ENCODE measurements at regions of chr6 and their contacts with region 1.

Region 1: DNA sequence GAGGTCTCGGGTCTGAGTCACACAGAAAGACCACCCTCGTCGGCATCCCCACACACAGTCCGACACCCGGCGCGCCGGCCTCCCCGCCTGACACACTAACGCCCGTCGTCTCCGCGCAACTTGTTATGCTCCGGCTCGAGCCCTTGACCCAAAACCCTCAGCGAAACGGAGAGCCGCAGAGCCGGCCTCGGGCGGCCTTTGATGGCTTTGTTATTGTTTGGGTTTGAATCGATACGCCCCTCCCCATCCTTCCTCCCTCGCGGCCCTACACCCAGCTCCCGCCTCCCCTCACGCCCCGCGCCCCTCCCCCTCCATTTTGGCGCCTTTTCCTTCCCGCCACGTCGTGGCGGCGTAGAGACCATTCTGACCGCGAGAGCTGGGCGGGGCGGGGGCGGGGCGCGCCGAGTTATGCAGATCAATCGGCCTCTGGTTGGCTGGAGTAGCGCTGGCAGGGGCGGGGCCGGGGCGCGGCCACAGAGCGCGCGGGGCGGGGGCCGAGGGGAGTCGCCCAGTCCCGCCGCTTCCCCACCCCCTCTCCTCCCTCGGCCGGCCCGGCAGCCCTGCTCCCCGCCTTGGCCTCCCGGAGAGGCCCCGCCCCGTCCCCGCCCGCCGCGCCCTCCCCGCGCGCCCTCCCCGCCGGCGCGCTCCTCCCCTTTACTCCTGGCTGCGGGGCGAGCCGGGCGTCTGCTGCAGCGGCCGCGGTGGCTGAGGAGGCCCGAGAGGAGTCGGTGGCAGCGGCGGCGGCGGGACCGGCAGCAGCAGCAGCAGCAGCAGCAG is at the start of gene PIM1:
- DNase-seq: peak; percentile 100
- ATAC-seq: peak; percentile 96
- H3K4me3 ChIP-seq: peak within 1 kb of the TSS; percentile 56 to 99
- H3K27ac ChIP-seq: peak within 1 kb of the TSS; percentile 64 to 91
- H3K4me1 ChIP-seq: peaks cover 0 to 4% of the 10 kb centered on the region in 2 donors
- H3K27me3 ChIP-seq: no peaks in the 10 kb centered on the region
- total RNA-seq, gene PIM1: 42.7 to 54.2 TPM

Region 2: GRCh38 chr6:36526066-36526465 is 643.6 kb before region 1 on chr6:
- intact Hi-C with region 1: no loop called
- DNase-seq: no peak
- ATAC-seq: no peak
- H3K4me3 ChIP-seq: no peak overlapping the region
- H3K27ac ChIP-seq: no peak overlapping the region
- H3K4me1 ChIP-seq: peaks cover 0 to 2% of the 10 kb centered on the region in 2 donors
- H3K27me3 ChIP-seq: no peaks in the 10 kb centered on the region

Region 3: DNA sequence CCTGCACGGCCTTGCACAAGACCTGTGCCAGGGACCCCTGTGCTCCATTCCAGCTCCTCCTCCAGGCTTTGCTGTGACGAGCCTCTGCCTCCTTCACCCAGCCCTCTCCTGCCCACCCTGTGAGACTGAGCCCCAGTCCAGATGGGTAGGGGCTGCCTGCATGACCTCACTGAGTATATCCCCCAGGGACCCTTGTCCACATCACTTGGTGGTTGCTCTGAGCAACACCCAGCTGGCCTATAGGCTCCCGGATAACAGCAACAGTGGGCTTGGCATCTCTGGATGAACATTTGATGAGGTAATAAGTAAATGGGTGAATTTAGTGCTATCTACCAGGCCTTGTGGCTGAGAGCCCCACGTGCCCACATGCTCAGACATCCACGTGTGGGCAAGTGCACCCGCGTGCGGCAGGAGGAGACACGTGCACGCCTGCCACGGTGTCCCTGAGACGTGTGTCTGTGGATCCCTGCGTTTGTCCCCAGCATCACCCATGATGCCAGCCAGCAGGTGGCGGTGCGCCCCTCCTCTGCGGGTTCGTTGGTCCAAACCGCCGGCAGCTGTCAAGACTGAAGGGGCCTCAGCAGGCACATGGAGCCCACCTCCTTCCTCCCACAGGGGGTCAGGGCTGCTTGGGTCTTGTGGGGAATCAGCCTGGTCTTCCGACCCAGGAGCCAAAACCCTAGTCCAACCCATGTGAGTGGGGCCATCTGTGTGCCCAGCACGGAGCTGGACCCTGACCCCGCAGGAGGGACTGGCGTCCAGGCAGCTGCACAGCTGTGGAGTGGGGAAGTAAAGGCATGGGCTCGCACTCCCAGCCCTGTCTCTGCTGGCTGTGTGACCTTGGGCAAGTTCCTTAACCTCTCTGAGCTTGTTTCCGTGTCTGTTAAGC is 118.3 kb before region 1 on chr6:
- intact Hi-C with region 1: loop called (anchors 1 to 2 kb)
- DNase-seq: peak; percentile 93 to 98
- ATAC-seq: peak; percentile 88
- H3K4me3 ChIP-seq: no peak overlapping the region
- H3K27ac ChIP-seq: no peak overlapping the region
- H3K4me1 ChIP-seq: no peaks in the 10 kb centered on the region
- H3K27me3 ChIP-seq: no peaks in the 10 kb centered on the region

Region 4: DNA sequence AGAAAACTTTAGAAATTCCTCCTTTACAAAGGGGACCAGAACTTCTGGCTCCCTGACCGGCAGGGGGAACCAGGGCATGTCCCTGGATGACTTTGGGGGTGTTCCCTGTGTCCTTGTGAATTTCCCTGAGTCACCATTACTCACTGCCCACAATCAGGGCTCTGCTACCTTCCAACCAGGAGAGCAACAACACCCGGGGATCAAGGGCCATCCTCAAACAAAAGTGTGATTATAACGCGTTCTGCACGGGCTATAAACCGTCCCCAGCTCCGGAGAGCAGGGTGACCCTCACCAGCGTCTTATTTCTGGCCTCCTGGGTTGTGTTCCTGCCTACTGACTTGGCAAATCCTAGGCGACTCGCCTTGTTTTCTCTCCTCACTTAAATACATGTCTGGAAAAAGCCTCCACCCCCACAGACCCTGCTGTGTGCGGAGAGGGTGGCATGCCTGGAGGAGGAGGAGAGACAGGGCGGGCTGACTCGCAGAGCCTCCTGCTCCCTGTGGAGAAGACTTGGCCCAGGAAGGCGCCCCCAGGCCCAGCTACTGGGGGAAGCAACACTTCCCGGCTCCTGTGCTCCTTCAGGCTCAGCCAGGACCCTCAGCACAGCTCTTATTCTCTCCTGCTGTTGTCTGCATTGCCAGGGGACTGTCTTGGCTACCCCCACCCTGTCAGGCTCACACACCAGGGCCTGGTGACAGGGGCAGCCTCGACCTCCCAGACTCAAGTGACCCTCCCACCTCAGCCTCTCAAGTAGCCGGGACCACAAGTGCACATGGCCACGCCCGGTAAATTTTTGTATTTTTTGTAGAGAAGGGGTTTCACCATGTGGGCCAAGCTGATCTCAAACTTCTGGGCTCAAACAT is 110.1 kb before region 1 on chr6:
- intact Hi-C with region 1: loop called in 1 of 2 experiments (anchors 1 kb)
- DNase-seq: peak; percentile 81 to 84
- ATAC-seq: peak; percentile 74
- H3K4me3 ChIP-seq: no peak overlapping the region
- H3K27ac ChIP-seq: peak overlapping the region in 1 of 2 donors; percentile 39
- H3K4me1 ChIP-seq: no peaks in the 10 kb centered on the region
- H3K27me3 ChIP-seq: no peaks in the 10 kb centered on the region

Region 5: DNA sequence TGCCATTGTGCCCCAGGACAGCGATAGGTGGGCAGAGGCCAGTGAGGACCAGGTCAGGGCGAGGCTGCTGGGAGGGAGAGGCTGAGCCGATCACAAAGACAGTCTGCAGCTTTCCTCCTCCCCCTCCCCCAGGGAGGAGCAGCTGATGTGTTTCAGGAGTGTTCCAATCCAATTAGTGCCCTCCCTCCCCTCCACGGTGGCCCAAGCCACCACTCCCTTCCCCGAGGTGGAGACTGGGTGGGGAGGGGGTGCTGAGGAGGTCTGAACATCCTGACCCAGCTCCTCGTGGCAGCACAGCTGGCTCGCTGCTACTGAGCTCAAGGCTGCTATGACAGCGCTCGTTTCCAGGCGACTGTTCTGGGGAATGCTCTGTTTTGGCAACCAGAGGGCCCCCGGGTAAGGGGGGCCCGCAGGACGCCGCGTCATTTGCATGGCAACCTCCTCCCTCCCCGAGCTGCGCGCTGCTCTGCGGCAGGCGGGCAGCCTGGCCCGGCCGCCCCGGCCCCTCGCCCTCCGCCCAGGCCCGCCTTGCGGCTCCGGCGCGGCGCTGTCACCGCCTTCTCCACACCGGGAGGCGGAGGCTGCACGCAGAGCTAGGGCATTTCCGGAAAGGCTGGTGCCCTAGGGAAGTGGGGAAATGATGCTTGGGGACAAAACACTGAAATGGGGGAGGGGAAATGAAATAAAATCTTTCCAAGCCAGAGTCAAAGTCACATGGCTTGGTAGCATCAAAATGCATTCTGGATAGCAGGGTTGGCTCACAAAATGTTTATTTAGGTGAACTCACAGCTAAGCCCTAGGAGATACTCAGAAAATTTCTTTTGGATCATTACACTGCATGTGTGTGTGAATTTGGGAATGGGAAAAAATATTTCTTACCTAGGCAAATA is 67.2 kb before region 1 on chr6:
- intact Hi-C with region 1: loop called in 1 of 2 experiments (anchors 1 kb)
- DNase-seq: peak; percentile 94 to 95
- ATAC-seq: peak; percentile 93
- H3K4me3 ChIP-seq: peak overlapping the region; percentile 16 to 29
- H3K27ac ChIP-seq: peak overlapping the region; percentile 62 to 93
- H3K4me1 ChIP-seq: no peaks in the 10 kb centered on the region
- H3K27me3 ChIP-seq: no peaks in the 10 kb centered on the region

Region 6: DNA sequence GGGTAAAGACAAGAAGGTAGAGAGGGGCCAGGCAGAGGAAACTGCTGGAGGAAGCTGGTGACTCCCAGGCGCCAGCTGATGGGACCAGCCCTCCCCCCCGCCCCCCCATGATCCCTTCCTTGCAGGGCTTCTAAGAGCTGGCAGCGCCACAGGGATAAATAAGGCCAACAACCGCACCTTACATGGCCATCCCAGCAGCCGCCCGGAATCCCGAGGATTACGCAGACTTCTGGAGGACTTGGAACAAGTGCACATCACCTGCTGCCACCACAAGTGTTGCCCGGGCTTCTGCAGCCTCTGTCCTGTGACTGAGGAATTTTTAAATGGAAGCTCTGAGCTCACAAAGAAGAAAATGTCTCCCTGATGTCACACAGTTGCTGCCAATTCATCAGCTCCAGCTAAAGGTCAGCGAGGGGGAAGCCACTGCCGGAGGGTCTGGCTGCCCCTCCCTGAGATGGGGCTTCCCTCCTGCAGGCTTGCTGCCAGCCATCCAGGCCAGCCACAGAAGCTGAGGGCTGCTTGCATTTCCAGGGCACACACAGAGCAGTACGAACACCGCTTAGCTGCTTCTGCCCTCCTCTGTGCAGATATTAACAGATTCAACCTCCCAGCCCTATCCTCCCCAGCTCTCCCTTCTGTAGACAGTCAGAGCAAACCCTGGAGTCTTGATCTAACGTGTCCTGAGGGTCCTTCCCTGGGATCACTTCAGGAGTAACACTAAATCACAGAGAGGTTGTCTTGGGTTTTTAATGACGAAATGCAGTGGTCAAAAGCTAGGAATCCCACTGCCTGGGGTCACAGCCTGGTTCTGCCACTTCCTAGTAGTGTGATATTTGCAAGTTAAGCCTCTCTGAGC is 38.4 kb before region 1 on chr6:
- intact Hi-C with region 1: loop called (anchors 1 to 5 kb)
- DNase-seq: peak; percentile 80 to 82
- ATAC-seq: peak; percentile 51
- H3K4me3 ChIP-seq: no peak overlapping the region
- H3K27ac ChIP-seq: peak overlapping the region in 1 of 2 donors; percentile 34
- H3K4me1 ChIP-seq: no peaks in the 10 kb centered on the region
- H3K27me3 ChIP-seq: no peaks in the 10 kb centered on the region

Region 7: GRCh38 chr6:37137201-37138090 is 32.2 kb before region 1 on chr6:
- intact Hi-C with region 1: loop called (anchors 2 to 5 kb)
- DNase-seq: peak in 1 of 2 donors; percentile 53
- ATAC-seq: peak; percentile 67
- H3K4me3 ChIP-seq: no peak overlapping the region
- H3K27ac ChIP-seq: peak overlapping the region; percentile 37 to 77
- H3K4me1 ChIP-seq: peaks cover 0 to 5% of the 10 kb centered on the region in 2 donors
- H3K27me3 ChIP-seq: no peaks in the 10 kb centered on the region

Region 8: DNA sequence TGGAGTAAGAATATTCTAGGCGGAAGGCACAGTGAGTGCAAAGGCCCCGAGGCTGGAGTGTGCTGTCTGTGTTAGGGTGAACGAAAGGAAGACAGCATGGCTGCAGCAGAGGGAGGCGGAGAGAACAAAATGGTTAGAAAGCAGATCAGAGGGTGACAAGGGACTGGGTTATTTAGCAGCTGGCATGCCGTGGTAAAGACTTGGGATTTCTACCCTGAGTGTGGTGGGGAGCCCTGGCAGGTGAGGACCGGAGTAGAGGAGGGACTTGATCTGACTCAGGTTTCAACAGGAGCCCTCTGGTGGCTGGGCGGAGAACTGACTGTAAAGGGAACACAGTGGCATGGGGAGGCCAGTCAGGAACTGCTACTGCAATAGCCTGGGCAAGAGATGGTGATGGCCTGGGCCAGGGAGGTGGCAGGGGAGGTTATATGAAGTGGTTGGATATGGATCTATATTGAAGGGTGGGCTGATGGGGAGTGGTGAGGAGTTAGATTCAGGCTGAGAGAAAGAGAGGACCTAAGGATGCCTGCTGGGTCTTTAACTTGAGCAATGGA is 38.3 kb after region 1 on chr6:
- intact Hi-C with region 1: loop called in 1 of 2 experiments (anchors 1 kb)
- DNase-seq: peak; percentile 91 to 92
- ATAC-seq: peak; percentile 69
- H3K4me3 ChIP-seq: no peak overlapping the region
- H3K27ac ChIP-seq: no peak overlapping the region
- H3K4me1 ChIP-seq: no peaks in the 10 kb centered on the region
- H3K27me3 ChIP-seq: no peaks in the 10 kb centered on the region

Region 9: GRCh38 chr6:37432916-37433656 is 263.4 kb after region 1 on chr6 and contains the start of gene CMTR1:
- intact Hi-C with region 1: no loop called
- DNase-seq: peak; percentile 97 to 99
- ATAC-seq: peak; percentile 99
- H3K4me3 ChIP-seq: peak within 1 kb of the TSS; percentile 75 to 85
- H3K27ac ChIP-seq: peak within 1 kb of the TSS; percentile 83 to 91
- H3K4me1 ChIP-seq: peaks cover 6% of the 10 kb centered on the region in 2 donors
- H3K27me3 ChIP-seq: no peaks in the 10 kb centered on the region
- total RNA-seq, gene CMTR1: 31.5 to 43.1 TPM